A673 (cell line): ENCODE measurements at regions of chr13 and their contacts with region 1.

Region 1: GRCh38 chr13:76016799-76017400 is 380.8 kb downstream of the LMO7 start:
- DNase-seq: peak; percentile 48
- H3K4me3 ChIP-seq: no peak overlapping the region
- H3K27ac ChIP-seq: no peak overlapping the region
- H3K4me1 ChIP-seq: no peaks in the 10 kb centered on the region
- H3K27me3 ChIP-seq: peaks cover 7% of the 10 kb centered on the region
- CTCF ChIP-seq: peak; percentile 74

Region 2: GRCh38 chr13:75687150-75687763 is 329.6 kb before region 1 on chr13:
- CTCF ChIA-PET with region 1: no interaction called
- POLR2A ChIA-PET with region 1: no interaction called
- intact Hi-C with region 1: loop called (anchors 2 kb)
- DNase-seq: peak; percentile 66
- H3K4me3 ChIP-seq: no peak overlapping the region
- H3K27ac ChIP-seq: no peak overlapping the region
- H3K4me1 ChIP-seq: no peaks in the 10 kb centered on the region
- H3K27me3 ChIP-seq: no peaks in the 10 kb centered on the region
- CTCF ChIP-seq: peak; percentile 66

Region 3: DNA sequence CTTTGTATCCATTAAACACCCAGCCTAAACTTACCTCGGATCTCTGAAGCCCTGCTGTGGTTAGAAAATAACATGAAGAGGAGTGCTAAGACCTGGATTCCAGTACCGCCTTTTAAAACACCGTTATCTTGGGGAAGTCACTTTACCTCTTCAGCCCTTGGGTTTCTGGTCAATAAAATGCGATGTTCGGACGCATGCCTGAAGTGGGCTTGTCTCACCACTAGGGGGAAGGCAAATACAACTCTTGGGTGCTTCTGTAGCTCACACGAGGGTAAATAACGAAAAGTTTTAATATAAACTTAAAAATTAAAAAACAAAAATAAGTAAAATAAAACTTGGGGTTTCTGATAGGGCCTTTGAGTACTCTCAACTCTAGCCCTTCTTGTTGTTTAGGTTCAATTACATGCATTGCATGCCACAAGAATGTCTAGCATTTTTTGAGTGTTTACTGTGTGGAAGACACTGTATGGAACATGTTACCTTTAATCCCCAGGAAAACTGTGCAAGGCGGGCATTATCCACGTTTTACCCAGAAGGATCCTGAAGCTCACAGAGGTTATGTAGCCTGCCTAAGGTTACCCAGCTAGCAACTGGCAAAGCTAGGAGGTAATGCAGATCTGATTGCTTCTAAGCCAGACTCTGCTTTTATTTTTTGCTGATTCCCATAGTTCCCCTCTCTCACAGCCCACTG is 140.4 kb before region 1 on chr13:
- CTCF ChIA-PET with region 1: interaction called, 4 read pairs
- POLR2A ChIA-PET with region 1: no interaction called
- intact Hi-C with region 1: loop called (anchors 1 kb)
- DNase-seq: peak; percentile 67
- H3K4me3 ChIP-seq: no peak overlapping the region
- H3K27ac ChIP-seq: no peak overlapping the region
- H3K4me1 ChIP-seq: no peaks in the 10 kb centered on the region
- H3K27me3 ChIP-seq: peaks cover 10% of the 10 kb centered on the region
- CTCF ChIP-seq: peak; percentile 93